Tibial artery (tissue), 4 donors: ENCODE measurements at regions of chr1 and their contacts with region 1.

Region 1: DNA sequence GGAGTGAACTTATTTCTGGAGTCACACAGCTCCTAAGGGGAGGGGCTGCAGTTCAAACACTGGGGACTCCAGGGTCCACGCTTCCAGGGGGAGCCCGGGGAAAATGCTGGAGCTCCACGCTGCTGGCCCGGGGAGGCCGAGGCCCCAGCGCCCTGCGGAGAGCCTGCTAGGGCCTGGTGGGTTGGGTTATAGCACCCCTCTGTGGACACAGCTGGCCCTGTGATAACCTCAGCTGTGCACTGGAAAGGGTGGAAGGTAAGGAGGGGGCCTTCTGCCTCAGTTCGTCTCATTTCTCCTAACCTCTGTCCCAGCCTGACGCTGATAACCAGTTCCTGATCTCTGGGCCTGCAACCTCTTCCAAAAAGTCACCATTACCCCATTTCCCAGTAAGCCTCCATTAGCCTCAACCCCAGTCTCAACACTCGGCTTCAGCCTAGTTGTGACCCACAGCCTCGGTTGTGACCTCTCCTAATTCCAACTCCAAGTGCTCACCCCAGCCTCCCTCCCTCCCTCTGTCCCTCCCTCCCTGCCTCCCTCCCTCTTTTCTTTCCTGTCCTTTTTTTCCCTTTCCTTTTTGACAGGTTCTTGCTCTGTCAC is 7.1 kb downstream of the NBL1 start:
- DNase-seq: peak in 1 of 2 donors; percentile 80
- H3K4me3 ChIP-seq: no peak overlapping the region
- H3K27ac ChIP-seq: peak overlapping the region; percentile 53 to 66
- H3K4me1 ChIP-seq: peaks cover 0 to 72% (median 49%) of the 10 kb centered on the region in 4 donors
- H3K27me3 ChIP-seq: no peaks in the 10 kb centered on the region
- CTCF ChIP-seq: peak; percentile 74 to 79

Region 2: GRCh38 chr1:19344372-19345230 is 306.6 kb before region 1 on chr1:
- intact Hi-C with region 1: loop called (anchors 2 kb)
- DNase-seq: peak; percentile 50 to 73
- H3K4me3 ChIP-seq: no peak overlapping the region
- H3K27ac ChIP-seq: no peak overlapping the region
- H3K4me1 ChIP-seq: peaks cover 0 to 21% (median 10%) of the 10 kb centered on the region in 4 donors
- H3K27me3 ChIP-seq: no peaks in the 10 kb centered on the region
- CTCF ChIP-seq: peak; percentile 87 to 88

Region 3: DNA sequence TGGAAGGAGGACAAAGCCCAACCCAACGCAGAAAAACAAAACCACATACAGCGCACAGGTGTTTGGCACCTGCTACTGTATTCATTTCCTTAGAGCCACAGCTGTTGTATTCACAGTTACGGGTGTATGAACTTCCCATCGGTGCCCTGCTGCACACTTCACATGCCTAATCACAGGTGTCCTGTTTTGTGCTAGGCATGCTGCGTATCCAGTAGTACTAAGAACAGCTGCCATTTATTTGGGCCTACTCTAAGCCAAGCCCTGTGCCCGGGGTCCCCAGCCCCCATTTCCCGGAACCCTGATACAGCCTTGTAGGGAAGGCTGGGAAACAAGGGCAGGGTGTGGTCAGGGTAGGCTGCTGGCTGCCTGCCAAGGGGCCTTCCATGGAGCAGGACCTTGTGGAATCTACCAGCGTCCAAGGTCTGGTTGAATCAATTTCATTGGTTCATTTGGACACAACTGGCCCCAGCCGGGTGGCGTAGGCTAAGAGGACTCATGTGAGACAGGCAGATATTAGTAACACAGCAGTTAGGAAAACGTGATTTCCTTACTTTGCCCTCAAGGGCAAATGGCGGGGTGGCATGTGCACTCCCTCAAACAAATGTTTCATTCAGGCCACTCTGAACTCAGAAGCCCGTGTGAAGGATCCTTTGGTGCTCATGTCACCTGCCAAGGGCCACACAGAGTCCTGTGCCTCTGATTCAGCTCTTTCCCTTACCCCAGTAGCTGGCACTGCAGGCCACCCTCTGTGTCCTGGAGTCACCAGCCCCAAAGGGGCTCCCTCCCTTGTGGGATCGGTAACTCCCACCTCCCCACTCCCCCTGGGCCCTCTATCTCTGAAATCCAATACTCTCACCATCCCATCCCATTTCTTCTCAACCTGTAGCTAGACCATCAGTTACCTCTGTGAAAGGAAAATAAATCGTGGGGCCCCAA is 164.8 kb after region 1 on chr1:
- intact Hi-C with region 1: no loop called
- DNase-seq: peak in 1 of 2 donors; percentile 22
- H3K4me3 ChIP-seq: no peak overlapping the region
- H3K27ac ChIP-seq: no peak overlapping the region
- H3K4me1 ChIP-seq: peaks cover 0 to 20% (median 5%) of the 10 kb centered on the region in 4 donors
- H3K27me3 ChIP-seq: no peaks in the 10 kb centered on the region
- CTCF ChIP-seq: no peak